ENCODE measurements at regions of chr11 and their contacts with region 1.

Region 1: GRCh38 chr11:86456052-86456939 is 81.6 kb downstream of the CCDC81 start:
- DNase-seq: peak; percentile 87
- H3K4me3 ChIP-seq: no peak overlapping the region
- H3K27ac ChIP-seq: no peak overlapping the region
- H3K4me1 ChIP-seq: peaks cover 21% of the 10 kb centered on the region
- H3K27me3 ChIP-seq: no peaks in the 10 kb centered on the region

Region 2: DNA sequence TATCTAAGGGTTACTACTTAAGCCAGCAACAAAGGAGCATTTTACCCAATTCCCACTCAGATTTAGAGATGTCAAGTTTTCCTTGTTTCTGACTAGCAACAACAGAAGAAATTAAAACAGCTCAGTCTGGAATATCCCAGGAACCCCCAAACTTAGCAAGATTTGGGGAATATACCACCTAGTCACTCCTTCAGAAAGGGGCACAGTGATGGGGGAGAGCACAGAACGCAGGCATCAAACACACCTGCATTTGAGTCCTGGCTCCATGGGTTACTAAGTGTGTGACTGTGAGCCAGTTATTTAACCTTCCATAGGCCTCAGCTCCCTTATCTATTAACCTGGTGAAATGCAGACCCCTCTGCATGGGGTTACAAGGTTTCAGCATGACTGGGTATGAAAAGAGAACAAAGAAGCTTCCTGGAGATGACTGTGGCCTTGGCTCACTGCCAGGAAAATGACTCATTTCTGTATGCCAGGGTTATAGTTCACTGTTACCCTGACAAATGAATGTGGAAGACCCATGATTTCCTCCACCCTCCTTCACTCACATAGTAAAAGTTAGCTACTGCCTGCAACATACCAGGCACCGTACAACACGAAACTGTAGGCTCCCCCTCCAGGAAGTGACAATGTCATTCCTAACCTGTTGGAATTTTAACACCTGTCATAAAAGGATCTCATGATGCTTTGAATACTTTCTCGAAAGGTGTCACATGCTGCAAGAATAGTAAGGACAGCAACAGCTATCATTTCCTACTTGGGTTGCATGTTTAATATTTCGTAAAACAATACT is 136.6 kb after region 1 on chr11:
- in situ Hi-C with region 1: loop called (anchors 10 kb)
- DNase-seq: peak; percentile 70
- H3K4me3 ChIP-seq: no peak overlapping the region
- H3K27ac ChIP-seq: peak overlapping the region; percentile 54
- H3K4me1 ChIP-seq: peaks cover 27% of the 10 kb centered on the region
- H3K27me3 ChIP-seq: no peaks in the 10 kb centered on the region

Region 3: GRCh38 chr11:86818466-86819192 is 362.3 kb after region 1 on chr11:
- in situ Hi-C with region 1: loop called (anchors 5 kb)
- DNase-seq: peak; percentile 90
- H3K4me3 ChIP-seq: no peak overlapping the region
- H3K27ac ChIP-seq: peak overlapping the region; percentile 79
- H3K4me1 ChIP-seq: peaks cover 46% of the 10 kb centered on the region
- H3K27me3 ChIP-seq: no peaks in the 10 kb centered on the region

Region 4: DNA sequence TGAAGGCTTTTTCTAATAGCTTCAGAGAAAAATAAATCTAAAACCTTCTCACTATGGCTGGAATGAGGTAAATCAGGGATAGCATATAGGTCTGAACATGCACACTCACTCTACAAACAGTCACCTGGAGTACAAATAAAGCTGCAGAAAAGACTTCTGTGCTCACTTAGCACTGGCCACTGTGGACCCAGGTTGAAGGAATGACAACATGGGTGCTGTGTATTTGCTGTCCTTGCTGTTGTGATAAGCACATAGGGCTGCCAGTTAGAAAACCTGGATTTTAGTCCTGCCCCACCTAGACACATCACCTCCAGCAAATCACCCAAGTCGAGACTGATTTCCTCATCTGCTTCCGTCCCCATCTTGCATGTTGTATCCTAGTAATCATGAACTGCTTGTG is 447.7 kb after region 1 on chr11:
- in situ Hi-C with region 1: loop called (anchors 10 kb)
- DNase-seq: no peak
- H3K4me3 ChIP-seq: no peak overlapping the region
- H3K27ac ChIP-seq: no peak overlapping the region
- H3K4me1 ChIP-seq: no peaks in the 10 kb centered on the region
- H3K27me3 ChIP-seq: no peaks in the 10 kb centered on the region

Region 5: GRCh38 chr11:87290304-87290922 is 834.1 kb after region 1 on chr11:
- in situ Hi-C with region 1: loop called (anchors 25 kb)
- DNase-seq: peak; percentile 73
- H3K4me3 ChIP-seq: no peak overlapping the region
- H3K27ac ChIP-seq: no peak overlapping the region
- H3K4me1 ChIP-seq: no peaks in the 10 kb centered on the region
- H3K27me3 ChIP-seq: no peaks in the 10 kb centered on the region

Measured in GM23248 (cell line).